Testis (tissue), 5 donors: ENCODE measurements at regions of chr1 and their contacts with region 1.

Region 1: GRCh38 chr1:205591522-205592351 is 40.1 kb downstream of the ELK4 start:
- DNase-seq: peak; percentile 92
- H3K4me3 ChIP-seq: peak overlapping the region; percentile 29 to 54
- H3K27ac ChIP-seq: no peak overlapping the region
- H3K4me1 ChIP-seq: peaks cover 3% of the 10 kb centered on the region
- H3K27me3 ChIP-seq: no peaks in the 10 kb centered on the region
- CTCF ChIP-seq: peak; percentile 92 to 96 (median 93)
- POLR2A ChIP-seq: no peak

Region 2: DNA sequence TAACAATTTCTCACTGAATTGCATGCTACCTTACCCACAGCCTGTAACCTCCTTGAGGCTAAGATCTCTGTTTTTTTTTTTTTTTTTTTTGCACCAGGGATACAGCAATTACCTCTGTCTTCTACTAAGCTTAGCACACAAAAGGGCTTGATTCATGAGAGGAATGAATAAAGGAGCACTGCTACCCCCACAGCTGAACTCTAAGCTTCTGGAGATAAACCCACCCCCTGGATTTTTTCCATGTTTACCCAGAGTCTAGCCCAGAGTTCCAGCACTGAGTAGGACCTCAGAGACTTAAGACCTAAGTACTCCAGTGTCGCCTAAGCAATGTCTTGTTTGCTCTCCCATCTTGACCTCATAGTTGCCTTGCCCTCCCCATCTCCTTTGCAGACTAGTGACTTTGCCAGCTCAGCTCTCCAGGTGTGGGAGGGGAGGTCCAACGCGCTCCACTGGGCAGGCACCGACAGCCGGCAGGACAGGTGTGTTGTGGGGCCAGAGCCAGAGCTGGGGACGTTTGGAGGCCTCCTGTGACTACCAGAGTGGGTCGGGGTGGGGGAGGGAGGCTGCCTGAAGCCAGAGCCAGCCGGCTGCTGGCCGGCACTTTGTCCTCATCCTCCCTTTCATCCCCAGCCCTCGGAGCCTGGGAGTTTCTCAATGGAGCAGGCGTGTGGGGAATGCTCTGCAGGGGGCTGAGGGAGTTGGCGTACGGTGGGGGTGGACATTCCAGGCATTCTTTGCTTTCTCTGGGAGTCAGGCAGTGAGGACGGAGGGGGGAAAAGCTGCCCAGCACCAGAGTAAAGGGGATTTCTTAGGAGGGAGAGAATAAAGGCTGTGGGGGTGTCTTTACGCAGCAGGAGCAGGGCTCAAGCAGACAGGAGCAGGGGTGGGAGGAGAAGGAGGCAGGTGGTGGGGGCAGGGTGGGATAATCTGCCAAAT is 290.6 kb before region 1 on chr1:
- intact Hi-C with region 1: no loop called
- DNase-seq: peak; percentile 86
- H3K4me3 ChIP-seq: no peak overlapping the region
- H3K27ac ChIP-seq: peak overlapping the region in 1 of 2 donors; percentile 39
- H3K4me1 ChIP-seq: peaks cover 15% of the 10 kb centered on the region
- H3K27me3 ChIP-seq: no peaks in the 10 kb centered on the region
- CTCF ChIP-seq: no peak
- POLR2A ChIP-seq: no peak

Region 3: GRCh38 chr1:205631727-205632373 is 40.1 kb after region 1 on chr1 and contains the start of gene ELK4:
- intact Hi-C with region 1: loop called (anchors 2 kb)
- DNase-seq: peak; percentile 99
- H3K4me3 ChIP-seq: peak within 1 kb of the TSS; percentile 79 to 89
- H3K27ac ChIP-seq: peak within 1 kb of the TSS; percentile 88 to 95
- H3K4me1 ChIP-seq: peaks cover 21% of the 10 kb centered on the region
- H3K27me3 ChIP-seq: no peaks in the 10 kb centered on the region
- CTCF ChIP-seq: peak; percentile 58 to 81 (median 71)
- POLR2A ChIP-seq: peak; percentile 86
- total RNA-seq, gene ELK4: 20.5 to 25.4 TPM